Activated naive CD4-positive, alpha-beta T cell treated with anti-CD3 and anti-CD28 coated beads for 36 hours (primary cell): ENCODE measurements at regions of chr13 and their contacts with region 1.

Region 1: DNA sequence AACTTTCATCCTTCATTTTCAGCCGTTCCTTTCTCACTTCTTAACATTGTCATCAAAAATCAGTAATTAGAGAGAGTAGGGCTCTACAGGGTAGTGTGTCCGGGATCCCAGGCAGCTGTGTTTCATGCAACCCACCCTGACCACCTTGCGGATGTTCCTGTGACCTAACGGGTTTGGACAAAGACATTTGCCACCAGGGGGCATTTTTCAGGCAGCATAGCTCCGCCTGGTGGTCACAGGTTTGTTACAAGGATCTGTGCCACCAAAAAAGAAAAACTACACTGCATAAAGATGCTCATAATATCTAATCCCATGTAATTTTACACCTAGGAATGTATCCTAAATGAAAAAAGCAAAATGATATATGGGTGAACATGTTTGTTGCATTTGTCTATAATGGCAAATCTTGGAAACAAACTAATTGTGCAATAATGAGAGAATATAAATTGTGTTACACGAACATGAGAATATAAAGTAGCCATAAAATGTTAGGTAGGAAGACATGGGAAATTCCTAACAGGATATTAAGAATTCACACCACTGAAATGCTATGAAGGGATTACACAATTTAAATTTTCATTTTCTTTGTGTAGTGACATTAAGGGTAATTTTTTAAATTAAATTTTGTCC is 123.0 kb downstream of the SLC7A1 start:
- DNase-seq: peak; percentile 65
- H3K4me3 Mint-ChIP-seq: no peak overlapping the region
- H3K27ac Mint-ChIP-seq: no peak overlapping the region
- H3K4me1 Mint-ChIP-seq: no peaks in the 10 kb centered on the region
- H3K27me3 Mint-ChIP-seq: peaks cover 2% of the 10 kb centered on the region

Region 2: GRCh38 chr13:29454911-29455481 is 17.5 kb before region 1 on chr13:
- CTCF ChIA-PET with region 1: interaction called, 15 read pairs
- intact Hi-C with region 1: no loop called
- DNase-seq: peak; percentile 6
- H3K4me3 Mint-ChIP-seq: no peak overlapping the region
- H3K27ac Mint-ChIP-seq: no peak overlapping the region
- H3K4me1 Mint-ChIP-seq: no peaks in the 10 kb centered on the region
- H3K27me3 Mint-ChIP-seq: peaks cover 8% of the 10 kb centered on the region

Region 3: GRCh38 chr13:29707876-29708543 is 235.6 kb after region 1 on chr13:
- CTCF ChIA-PET with region 1: interaction called, 15 read pairs
- intact Hi-C with region 1: loop called (anchors 2 kb)
- DNase-seq: peak; percentile 68
- H3K4me3 Mint-ChIP-seq: no peak overlapping the region
- H3K27ac Mint-ChIP-seq: no peak overlapping the region
- H3K4me1 Mint-ChIP-seq: no peaks in the 10 kb centered on the region
- H3K27me3 Mint-ChIP-seq: peaks cover 7% of the 10 kb centered on the region